Activated CD4-positive, alpha-beta T cell treated with anti-CD3 and anti-CD28 coated beads, Interleukin-2, amount 10 ng/mL, durations not matched to agents 7 days and 5 days (primary cell): ENCODE measurements at regions of chr12 and their contacts with region 1.

Region 1: GRCh38 chr12:14473707-14474287 is 93.9 kb downstream of the PLBD1 start:
- DNase-seq: no peak
- H3K4me3 Mint-ChIP-seq: no peak overlapping the region
- H3K27ac Mint-ChIP-seq: no peak overlapping the region
- H3K4me1 Mint-ChIP-seq: peaks cover 2% of the 10 kb centered on the region
- H3K27me3 Mint-ChIP-seq: no peaks in the 10 kb centered on the region

Region 2: GRCh38 chr12:14394317-14395073 is 79.3 kb before region 1 on chr12:
- CTCF ChIA-PET with region 1: no interaction called
- POLR2A ChIA-PET with region 1: interaction called, 11 read pairs
- DNase-seq: peak; percentile 61
- H3K4me3 Mint-ChIP-seq: peak overlapping the region; percentile 80
- H3K27ac Mint-ChIP-seq: peak overlapping the region; percentile 95
- H3K4me1 Mint-ChIP-seq: peaks cover 87% of the 10 kb centered on the region
- H3K27me3 Mint-ChIP-seq: no peaks in the 10 kb centered on the region